Heart right ventricle (tissue), 16 donors: ENCODE measurements at regions of chr7 and their contacts with region 1.

Region 1: DNA sequence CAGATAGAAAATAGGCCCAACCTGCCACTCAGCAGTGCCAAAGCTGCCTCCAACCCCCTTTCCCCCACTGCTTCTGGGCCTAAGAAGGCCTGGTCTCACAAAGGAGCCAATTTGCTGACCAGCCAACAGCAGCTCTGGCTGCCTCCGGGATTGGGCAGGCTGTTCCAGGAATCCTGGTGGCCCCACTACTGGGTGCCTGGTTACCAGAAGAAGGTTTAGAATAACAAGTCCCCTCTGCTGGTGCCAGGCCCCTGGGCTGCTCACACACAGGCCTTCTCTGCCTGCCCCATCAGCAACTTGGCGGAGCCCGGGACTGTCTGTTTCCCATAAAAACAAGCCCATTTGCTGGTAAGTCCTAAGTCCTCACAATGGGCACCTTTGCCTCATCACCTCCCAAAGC is 1.2 kb downstream of the PHKG1 start:
- DNase-seq: peak; percentile 70 to 78
- ATAC-seq: peak; percentile 78 to 95 (median 90)
- H3K4me3 ChIP-seq: peak overlapping the region in 8 of 10 donors; percentile 25 to 49 (median 42)
- H3K27ac ChIP-seq: peak overlapping the region; percentile 74 to 92 (median 84)
- H3K4me1 ChIP-seq: peaks cover 3 to 33% (median 25%) of the 10 kb centered on the region in 9 donors
- H3K27me3 ChIP-seq: no peaks in the 10 kb centered on the region
- CTCF ChIP-seq: no peak

Region 2: GRCh38 chr7:55723621-55723941 is 368.0 kb before region 1 on chr7:
- intact Hi-C with region 1: no loop called
- DNase-seq: no peak
- ATAC-seq: no peak
- H3K4me3 ChIP-seq: no peak overlapping the region
- H3K27ac ChIP-seq: no peak overlapping the region
- H3K4me1 ChIP-seq: no peaks in the 10 kb centered on the region
- H3K27me3 ChIP-seq: no peaks in the 10 kb centered on the region
- CTCF ChIP-seq: no peak

Region 3: GRCh38 chr7:55928006-55928767 is 163.4 kb before region 1 on chr7:
- intact Hi-C with region 1: no loop called
- DNase-seq: no peak
- ATAC-seq: no peak
- H3K4me3 ChIP-seq: no peak overlapping the region
- H3K27ac ChIP-seq: no peak overlapping the region
- H3K4me1 ChIP-seq: no peaks in the 10 kb centered on the region
- H3K27me3 ChIP-seq: no peaks in the 10 kb centered on the region
- CTCF ChIP-seq: no peak

Region 4: DNA sequence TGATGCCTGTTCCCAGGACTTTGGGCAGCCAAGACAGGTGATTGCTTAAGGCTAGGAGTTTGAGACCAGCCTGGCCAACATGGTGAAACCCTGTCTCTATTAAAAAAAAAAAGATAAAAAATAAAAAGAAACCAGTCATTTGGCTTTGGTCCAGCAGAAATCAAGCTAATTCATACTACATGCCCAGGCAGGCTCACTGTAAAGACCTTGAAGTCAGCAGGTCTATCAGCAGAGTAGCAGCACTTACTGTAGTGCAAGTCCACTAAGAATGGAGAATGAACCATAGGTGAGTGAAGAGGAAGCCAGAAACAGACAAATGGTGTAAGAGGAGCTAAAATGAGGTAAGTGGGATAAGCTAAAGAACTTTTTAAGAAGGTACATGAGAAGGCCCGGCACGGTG is 65.1 kb before region 1 on chr7:
- intact Hi-C with region 1: no loop called
- DNase-seq: no peak
- ATAC-seq: no peak
- H3K4me3 ChIP-seq: no peak overlapping the region
- H3K27ac ChIP-seq: no peak overlapping the region
- H3K4me1 ChIP-seq: peaks cover 0 to 6% (median 0%) of the 10 kb centered on the region in 9 donors
- H3K27me3 ChIP-seq: no peaks in the 10 kb centered on the region
- CTCF ChIP-seq: no peak

Region 5: GRCh38 chr7:56079450-56080185 is 12.0 kb before region 1 on chr7:
- intact Hi-C with region 1: loop called in 1 of 10 experiments (anchors 1 kb)
- DNase-seq: peak; percentile 87 to 89
- ATAC-seq: peak; percentile 79 to 93 (median 90)
- H3K4me3 ChIP-seq: peak overlapping the region in 1 of 10 donors; percentile 3
- H3K27ac ChIP-seq: peak overlapping the region; percentile 70 to 95 (median 86)
- H3K4me1 ChIP-seq: peaks cover 20 to 47% (median 31%) of the 10 kb centered on the region in 9 donors
- H3K27me3 ChIP-seq: no peaks in the 10 kb centered on the region
- CTCF ChIP-seq: peak; percentile 63 to 94 (median 79)

Region 6: GRCh38 chr7:56157238-56157790 is 65.7 kb after region 1 on chr7:
- intact Hi-C with region 1: no loop called
- DNase-seq: no peak
- ATAC-seq: no peak
- H3K4me3 ChIP-seq: no peak overlapping the region
- H3K27ac ChIP-seq: no peak overlapping the region
- H3K4me1 ChIP-seq: no peaks in the 10 kb centered on the region
- H3K27me3 ChIP-seq: peaks cover 0 to 5% (median 0%) of the 10 kb centered on the region in 7 donors
- CTCF ChIP-seq: no peak